ENCODE measurements at regions of chr4 and their contacts with region 1.

Region 1: DNA sequence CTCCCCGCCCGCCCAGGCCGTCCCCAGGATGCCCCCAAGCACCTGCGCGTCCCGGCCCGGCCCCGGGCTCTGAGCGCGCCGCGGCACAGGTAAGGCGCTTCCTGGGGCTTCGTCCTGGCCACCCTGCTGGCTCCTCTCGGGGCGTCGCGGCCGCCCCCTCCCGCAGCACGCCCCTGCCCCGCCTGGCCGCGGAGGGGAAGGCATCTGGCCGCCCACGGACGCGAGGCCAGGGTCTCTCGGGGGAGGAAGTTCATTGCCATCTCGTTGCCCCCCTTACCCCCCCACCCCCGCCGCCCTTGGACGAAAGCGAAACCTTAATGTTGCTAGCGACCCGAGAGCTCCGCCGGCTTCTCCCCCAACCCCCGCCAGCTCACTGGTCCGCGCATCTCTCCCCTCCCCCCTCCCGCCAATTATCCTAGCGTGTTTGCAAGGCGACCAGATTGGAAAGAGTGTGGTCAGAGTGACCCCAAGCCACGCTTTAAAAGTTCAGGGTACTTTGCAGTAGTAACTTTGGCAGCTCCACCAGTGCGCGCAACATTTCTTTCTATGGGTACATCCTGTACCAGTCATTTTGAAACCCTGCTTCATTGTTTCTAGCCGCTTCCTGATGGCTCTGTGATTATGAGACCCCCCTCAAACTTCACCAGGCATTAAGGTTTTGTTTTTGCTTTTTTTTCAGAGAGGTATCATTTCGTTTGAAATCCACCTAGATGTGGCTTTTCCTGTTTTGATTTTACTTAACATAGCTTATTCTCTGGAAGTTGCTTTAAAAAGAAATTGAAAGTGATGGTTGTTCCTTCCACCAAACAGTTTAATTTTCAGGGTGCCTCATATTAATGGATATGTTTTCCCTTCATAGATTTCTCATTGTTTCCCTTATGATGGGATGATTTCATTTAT is 626 bp downstream of the TBC1D1 start:
- DNase-seq: peak in 1 of 2 donors; percentile 34
- ATAC-seq: peak; percentile 15 to 38 (median 28)
- H3K4me3 ChIP-seq: peak overlapping the region; percentile 65 to 96 (median 88)
- H3K27ac ChIP-seq: peak overlapping the region; percentile 85 to 95 (median 91)
- H3K4me1 ChIP-seq: peaks cover 0 to 49% (median 22%) of the 10 kb centered on the region in 9 donors
- H3K27me3 ChIP-seq: no peaks in the 10 kb centered on the region
- CTCF ChIP-seq: peak in 2 of 9 donors; percentile 10 to 16

Region 2: DNA sequence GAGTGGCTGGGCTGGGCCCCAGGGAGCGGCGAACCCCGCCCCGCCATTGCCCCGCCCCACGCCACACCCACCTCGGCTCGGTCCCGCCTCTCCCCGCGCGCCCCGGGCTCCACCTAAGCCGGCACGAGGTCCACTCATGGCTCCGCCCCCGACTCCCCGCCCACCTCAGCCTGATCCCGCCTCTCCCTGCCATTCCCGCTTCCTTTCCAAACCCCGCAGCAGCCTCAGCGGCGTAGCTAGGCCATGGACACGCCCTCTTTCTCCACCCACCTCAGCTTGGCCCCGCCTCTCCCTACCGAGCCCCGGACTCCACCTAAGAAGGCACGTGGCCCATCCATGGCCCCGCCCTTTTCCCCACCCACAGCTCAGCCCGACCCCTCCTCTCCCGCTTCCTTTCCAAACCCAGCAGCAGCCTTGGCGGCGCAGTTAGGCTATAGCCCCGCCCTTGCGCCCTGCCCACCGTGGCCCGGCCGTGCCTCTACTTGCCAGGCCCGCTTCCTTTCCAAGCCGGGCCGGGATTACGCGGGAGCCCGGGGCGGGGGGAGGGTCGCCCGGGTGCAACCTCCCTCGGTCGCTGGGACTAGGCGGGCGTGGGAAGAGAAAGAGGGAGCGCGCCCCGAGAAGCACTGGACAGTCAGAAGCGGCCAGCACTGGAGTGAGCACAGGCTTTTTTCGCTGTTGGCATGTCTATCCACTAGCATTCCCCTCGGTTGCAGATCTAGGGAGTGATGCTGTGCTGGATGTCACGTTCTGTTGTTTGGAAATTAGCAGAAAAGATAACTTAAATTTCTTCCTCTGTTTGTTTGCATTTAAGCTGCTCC is 204.9 kb before region 1 on chr4 and contains the start of gene RELL1:
- intact Hi-C with region 1: loop called in 1 of 10 experiments (anchors 10 kb)
- DNase-seq: peak; percentile 99 to 100
- ATAC-seq: peak; percentile 95 to 99 (median 97)
- H3K4me3 ChIP-seq: peak within 1 kb of the TSS; percentile 64 to 99 (median 93)
- H3K27ac ChIP-seq: peak within 1 kb of the TSS; percentile 78 to 99 (median 98)
- H3K4me1 ChIP-seq: peaks cover 0 to 45% (median 27%) of the 10 kb centered on the region in 9 donors
- H3K27me3 ChIP-seq: no peaks in the 10 kb centered on the region
- CTCF ChIP-seq: no peak
- total RNA-seq, gene RELL1: 18.1 to 39.9 (median 27.6) TPM

Region 3: GRCh38 chr4:37816006-37816405 is 75.5 kb before region 1 on chr4:
- intact Hi-C with region 1: loop called in 3 of 10 experiments (anchors 5 to 10 kb)
- DNase-seq: no peak
- ATAC-seq: no peak
- H3K4me3 ChIP-seq: no peak overlapping the region
- H3K27ac ChIP-seq: peak overlapping the region in 1 of 10 donors; percentile 4
- H3K4me1 ChIP-seq: peaks cover 0 to 14% (median 0%) of the 10 kb centered on the region in 9 donors
- H3K27me3 ChIP-seq: no peaks in the 10 kb centered on the region
- CTCF ChIP-seq: no peak

Region 4: GRCh38 chr4:37964734-37965457 is 73.4 kb after region 1 on chr4:
- intact Hi-C with region 1: loop called in 4 of 10 experiments (anchors 5 to 10 kb)
- DNase-seq: no peak
- ATAC-seq: peak in 1 of 8 donors; percentile 20
- H3K4me3 ChIP-seq: no peak overlapping the region
- H3K27ac ChIP-seq: no peak overlapping the region
- H3K4me1 ChIP-seq: peaks cover 0 to 36% (median 10%) of the 10 kb centered on the region in 9 donors
- H3K27me3 ChIP-seq: no peaks in the 10 kb centered on the region
- CTCF ChIP-seq: no peak

Region 5: GRCh38 chr4:37977471-37978247 is 86.1 kb after region 1 on chr4:
- intact Hi-C with region 1: loop called in 7 of 10 experiments (anchors 2 to 10 kb)
- DNase-seq: peak; percentile 79 to 80
- ATAC-seq: peak; percentile 80 to 90 (median 84)
- H3K4me3 ChIP-seq: peak overlapping the region; percentile 53 to 98 (median 92)
- H3K27ac ChIP-seq: peak overlapping the region; percentile 86 to 99 (median 98)
- H3K4me1 ChIP-seq: peaks cover 5 to 62% (median 42%) of the 10 kb centered on the region in 9 donors
- H3K27me3 ChIP-seq: no peaks in the 10 kb centered on the region
- CTCF ChIP-seq: peak; percentile 48 to 91 (median 76)

Measured in heart right ventricle (tissue), 16 donors.